ENCODE measurements at regions of chr19 and their contacts with region 1.

Region 1: DNA sequence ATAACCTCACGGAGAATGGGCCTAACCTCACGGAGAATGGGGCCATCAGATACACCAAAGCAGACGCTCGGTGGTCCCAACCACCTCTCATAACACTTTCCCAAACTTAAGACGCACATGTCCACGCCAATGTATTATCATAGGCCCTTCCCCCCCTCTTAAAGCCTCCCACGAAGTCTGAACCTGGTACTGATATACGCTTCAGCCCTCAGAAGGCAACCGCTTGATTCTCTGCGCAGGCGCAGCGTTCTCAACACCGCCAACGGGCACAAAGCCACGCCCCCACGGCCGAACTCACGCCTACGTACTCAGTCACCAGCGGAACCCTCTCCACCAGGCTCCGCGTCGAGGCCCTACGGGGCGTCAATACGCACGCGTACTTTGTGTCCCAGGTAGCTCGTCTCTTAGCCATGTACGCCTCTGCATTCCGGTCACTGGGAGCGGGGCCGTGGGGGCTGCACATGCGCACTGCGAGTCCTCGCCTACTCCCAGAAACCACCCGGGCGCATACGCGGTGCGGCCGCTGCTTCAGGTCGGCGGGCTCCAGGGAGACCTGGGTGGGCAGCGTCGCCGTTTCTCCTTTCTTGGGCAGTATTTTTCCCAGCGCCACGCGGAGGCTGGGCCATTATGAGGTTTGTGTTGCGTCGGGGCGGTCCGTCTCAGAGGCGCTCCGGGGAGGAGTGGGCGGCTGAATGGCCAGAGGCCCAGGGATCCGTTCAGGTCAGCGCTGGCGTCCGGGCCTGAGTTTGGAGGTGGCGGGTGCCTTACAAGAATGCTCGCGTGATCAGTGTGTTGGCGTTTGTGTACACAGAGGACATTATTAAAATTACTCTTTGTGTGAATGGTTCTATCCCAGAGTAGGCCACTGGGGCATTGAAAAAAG is 25.3 kb downstream of the ZNF582 start:
- DNase-seq: peak; percentile 40
- ATAC-seq: peak; percentile 90
- H3K4me3 ChIP-seq: peak overlapping the region; percentile 76
- H3K27ac ChIP-seq: no peak overlapping the region
- H3K4me1 ChIP-seq: no peaks in the 10 kb centered on the region
- H3K27me3 ChIP-seq: no peaks in the 10 kb centered on the region
- CTCF ChIP-seq: no peak
- EP300 ChIP-seq: no peak
- POLR2A ChIP-seq: peak; percentile 65
- RAD21 ChIP-seq: no peak

Region 2: GRCh38 chr19:56350416-56351045 is 17.5 kb before region 1 on chr19:
- CTCF ChIA-PET with region 1: interaction called, 18 read pairs
- POLR2A ChIA-PET with region 1: interaction called, 3 read pairs
- RAD21 ChIA-PET with region 1: no interaction called
- SMC1A ChIA-PET with region 1: interaction called, 3 read pairs
- in situ Hi-C with region 1: no loop called
- intact Hi-C with region 1: no loop called
- DNase-seq: peak; percentile 11
- ATAC-seq: peak; percentile 48; the same call in 2 of the 3 replicates
- H3K4me3 ChIP-seq: no peak overlapping the region
- H3K27ac ChIP-seq: no peak overlapping the region
- H3K4me1 ChIP-seq: no peaks in the 10 kb centered on the region
- H3K27me3 ChIP-seq: no peaks in the 10 kb centered on the region
- CTCF ChIP-seq: peak; percentile 74 to 84 (median 78); a peak in 5 of 6 replicates
- EP300 ChIP-seq: no peak
- POLR2A ChIP-seq: no peak
- RAD21 ChIP-seq: peak; percentile 53

Region 3: DNA sequence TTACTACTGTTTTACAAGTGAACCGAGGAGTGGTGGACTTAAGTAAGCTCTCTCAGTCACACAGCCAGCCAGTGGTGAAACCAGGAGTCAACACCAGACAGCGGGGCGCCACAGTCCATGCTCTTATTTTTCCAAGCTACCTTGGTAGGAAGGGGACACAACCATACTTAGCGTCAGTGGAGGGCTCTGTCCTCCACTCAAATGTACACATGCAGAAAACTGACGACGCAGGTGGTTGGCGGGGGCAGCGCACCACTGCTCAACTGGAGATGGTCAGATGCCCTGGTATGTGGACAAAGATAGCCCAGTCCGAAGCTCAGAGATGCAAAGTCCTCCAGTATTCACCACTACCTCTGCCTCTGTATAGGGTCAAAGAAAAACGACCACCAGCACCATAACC is 108.0 kb after region 1 on chr19:
- CTCF ChIA-PET with region 1: no interaction called
- POLR2A ChIA-PET with region 1: no interaction called
- RAD21 ChIA-PET with region 1: no interaction called
- SMC1A ChIA-PET with region 1: no interaction called
- in situ Hi-C with region 1: no loop called
- intact Hi-C with region 1: no loop called
- DNase-seq: no peak
- ATAC-seq: no peak
- H3K4me3 ChIP-seq: no peak overlapping the region
- H3K27ac ChIP-seq: no peak overlapping the region
- H3K4me1 ChIP-seq: no peaks in the 10 kb centered on the region
- H3K27me3 ChIP-seq: no peaks in the 10 kb centered on the region
- CTCF ChIP-seq: no peak
- EP300 ChIP-seq: no peak
- POLR2A ChIP-seq: no peak
- RAD21 ChIP-seq: no peak

Measured in GM12878 (cell line).